IMR-90 (cell line): ENCODE measurements at regions of chr3 and their contacts with region 1.

Region 1: DNA sequence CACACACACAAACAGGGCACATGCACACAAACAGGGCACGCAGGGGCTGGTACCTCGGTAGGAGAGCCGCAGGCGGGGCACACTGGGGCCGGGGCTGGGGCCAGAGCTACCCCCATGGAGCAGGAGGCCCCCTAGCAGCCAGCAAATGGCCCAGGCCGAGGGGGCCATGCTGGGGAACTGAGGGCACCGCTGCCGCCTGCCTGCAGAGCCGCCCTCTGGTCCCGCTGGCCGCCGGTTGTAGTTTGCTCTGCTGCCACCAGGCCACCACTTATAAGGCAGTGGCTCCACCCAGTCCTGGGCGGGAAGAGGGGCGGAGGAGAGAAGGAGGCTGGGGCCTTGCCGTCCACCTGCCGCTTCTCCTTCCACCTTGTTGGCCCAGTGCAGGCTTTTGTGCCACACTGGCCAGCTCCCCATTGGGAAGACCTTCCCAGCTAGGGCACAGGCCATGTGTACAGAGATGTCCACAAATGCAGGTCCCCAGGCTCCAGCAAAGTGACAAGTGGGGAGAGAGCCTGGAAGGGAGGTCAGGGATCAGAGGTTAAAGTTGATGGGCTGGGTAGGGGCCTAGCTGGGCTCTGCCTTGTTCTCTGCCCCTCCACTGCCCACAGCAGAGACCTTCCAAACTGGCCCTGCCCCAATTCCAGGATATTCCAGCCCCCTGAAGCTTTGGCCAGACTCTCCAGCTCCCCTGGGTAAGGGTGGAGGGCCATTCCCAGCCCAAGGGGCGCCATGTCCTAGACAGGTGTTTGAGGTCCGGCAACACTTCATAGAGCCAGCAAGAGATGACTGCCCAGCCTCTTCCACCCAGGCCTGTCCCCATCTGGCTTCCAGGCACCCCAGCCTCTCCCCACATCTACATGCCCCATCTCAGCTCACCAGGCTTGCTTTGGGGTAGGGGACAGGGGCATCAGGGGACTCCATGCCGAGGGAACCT is at the start of gene SEMA3G:
- DNase-seq: peak; percentile 34
- ATAC-seq: peak; percentile 92
- H3K4me3 ChIP-seq: no peak within 1 kb of the TSS
- H3K27ac ChIP-seq: no peak within 1 kb of the TSS
- H3K4me1 ChIP-seq: no peaks in the 10 kb centered on the region; the same call in 1 of the 2 replicates
- H3K27me3 ChIP-seq: no peaks in the 10 kb centered on the region
- CTCF ChIP-seq: peak; percentile 50
- POLR2A ChIP-seq: no peak
- RAD21 ChIP-seq: no peak
- total RNA-seq, gene SEMA3G: not detected in 2 replicates

Region 2: GRCh38 chr3:52197842-52198668 is 247.1 kb before region 1 on chr3 and contains the start of gene ALAS1:
- CTCF ChIA-PET with region 1: no interaction called
- POLR2A ChIA-PET with region 1: no interaction called
- dilution Hi-C with region 1: no loop called
- in situ Hi-C with region 1: no loop called
- intact Hi-C with region 1: no loop called
- DNase-seq: peak; percentile 82
- ATAC-seq: peak; percentile 84
- H3K4me3 ChIP-seq: peak within 1 kb of the TSS; percentile 85
- H3K27ac ChIP-seq: peak within 1 kb of the TSS; percentile 81
- H3K4me1 ChIP-seq: peaks cover 36% of the 10 kb centered on the region
- H3K27me3 ChIP-seq: no peaks in the 10 kb centered on the region
- CTCF ChIP-seq: no peak
- POLR2A ChIP-seq: peak; percentile 91
- RAD21 ChIP-seq: no peak
- total RNA-seq, gene ALAS1: 29.7 and 32.8 TPM in 2 replicates

Region 3: DNA sequence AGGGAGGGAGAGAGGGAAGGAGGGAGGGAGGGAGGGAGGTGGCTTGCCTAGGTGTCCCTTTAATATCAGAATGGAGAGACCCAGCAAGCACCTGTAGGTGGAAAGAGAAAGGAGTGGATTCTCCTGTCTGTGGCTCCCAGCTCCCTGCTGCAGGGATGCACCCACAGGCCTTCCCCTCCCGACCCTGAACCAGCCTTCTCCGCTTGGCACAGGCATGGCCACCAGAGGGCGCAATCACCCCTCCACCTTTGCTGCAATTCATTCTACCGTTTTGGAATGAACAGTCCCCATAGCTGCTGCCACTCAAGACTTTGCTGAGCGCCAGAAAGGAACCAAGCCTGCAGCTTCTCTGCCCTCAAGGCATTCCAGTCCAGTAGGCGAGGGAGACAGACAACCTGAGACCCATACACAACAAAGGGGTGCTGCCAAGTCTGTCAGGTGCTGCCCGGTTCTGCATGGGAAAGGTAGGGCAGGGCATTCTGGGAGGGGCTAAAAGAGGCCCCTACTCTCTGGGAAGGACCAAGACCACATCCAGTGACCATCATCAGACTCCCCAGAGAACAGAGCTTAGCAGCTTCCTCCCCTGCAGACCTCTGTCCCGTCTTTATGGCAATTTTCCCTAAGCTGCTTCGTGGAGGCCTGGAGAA is 224.6 kb before region 1 on chr3:
- CTCF ChIA-PET with region 1: no interaction called
- POLR2A ChIA-PET with region 1: no interaction called
- dilution Hi-C with region 1: no loop called
- in situ Hi-C with region 1: no loop called
- intact Hi-C with region 1: loop called (anchors 5 kb)
- DNase-seq: peak; percentile 63
- ATAC-seq: peak; percentile 73
- H3K4me3 ChIP-seq: no peak overlapping the region
- H3K27ac ChIP-seq: no peak overlapping the region
- H3K4me1 ChIP-seq: peaks cover 8% of the 10 kb centered on the region
- H3K27me3 ChIP-seq: no peaks in the 10 kb centered on the region
- CTCF ChIP-seq: peak; percentile 88
- POLR2A ChIP-seq: no peak
- RAD21 ChIP-seq: peak; percentile 76

Region 4: GRCh38 chr3:52291508-52292181 is 153.5 kb before region 1 on chr3:
- CTCF ChIA-PET with region 1: no interaction called
- POLR2A ChIA-PET with region 1: no interaction called
- dilution Hi-C with region 1: no loop called
- in situ Hi-C with region 1: no loop called
- intact Hi-C with region 1: loop called (anchors 1 kb)
- DNase-seq: no peak
- ATAC-seq: peak; percentile 16; the same call in 1 of the 2 replicates
- H3K4me3 ChIP-seq: no peak overlapping the region
- H3K27ac ChIP-seq: no peak overlapping the region
- H3K4me1 ChIP-seq: peaks cover 6% of the 10 kb centered on the region
- H3K27me3 ChIP-seq: no peaks in the 10 kb centered on the region
- CTCF ChIP-seq: peak; percentile 65
- POLR2A ChIP-seq: no peak
- RAD21 ChIP-seq: peak; percentile 81

Region 5: GRCh38 chr3:52407779-52408178 is 37.3 kb before region 1 on chr3:
- CTCF ChIA-PET with region 1: interaction called, 11 read pairs
- POLR2A ChIA-PET with region 1: no interaction called
- dilution Hi-C with region 1: no loop called
- in situ Hi-C with region 1: no loop called
- intact Hi-C with region 1: loop called (anchors 1 kb)
- DNase-seq: no peak
- ATAC-seq: no peak
- H3K4me3 ChIP-seq: no peak overlapping the region
- H3K27ac ChIP-seq: no peak overlapping the region
- H3K4me1 ChIP-seq: peaks cover 18% of the 10 kb centered on the region
- H3K27me3 ChIP-seq: no peaks in the 10 kb centered on the region
- CTCF ChIP-seq: no peak
- POLR2A ChIP-seq: no peak
- RAD21 ChIP-seq: no peak

Region 6: GRCh38 chr3:52423173-52423572 is 22.0 kb before region 1 on chr3:
- CTCF ChIA-PET with region 1: interaction called, 13 read pairs
- POLR2A ChIA-PET with region 1: no interaction called
- dilution Hi-C with region 1: no loop called
- in situ Hi-C with region 1: no loop called
- intact Hi-C with region 1: loop called (anchors 1 kb)
- DNase-seq: no peak
- ATAC-seq: peak; percentile 48
- H3K4me3 ChIP-seq: no peak overlapping the region
- H3K27ac ChIP-seq: no peak overlapping the region
- H3K4me1 ChIP-seq: no peaks in the 10 kb centered on the region
- H3K27me3 ChIP-seq: 0 out of 2 replicates have a peak, but pooled peaks cover 2% of the 10 kb centered on the region
- CTCF ChIP-seq: no peak
- POLR2A ChIP-seq: no peak
- RAD21 ChIP-seq: no peak

Region 7: GRCh38 chr3:52428151-52429005 is 16.7 kb before region 1 on chr3:
- CTCF ChIA-PET with region 1: interaction called, 13 read pairs
- POLR2A ChIA-PET with region 1: no interaction called
- dilution Hi-C with region 1: no loop called
- in situ Hi-C with region 1: no loop called
- intact Hi-C with region 1: loop called (anchors 1 kb)
- DNase-seq: peak; percentile 83
- ATAC-seq: peak; percentile 98
- H3K4me3 ChIP-seq: no peak overlapping the region
- H3K27ac ChIP-seq: no peak overlapping the region
- H3K4me1 ChIP-seq: peaks cover 4% of the 10 kb centered on the region; the same call in 1 of the 2 replicates
- H3K27me3 ChIP-seq: peaks cover 5% of the 10 kb centered on the region; the same call in 1 of the 2 replicates
- CTCF ChIP-seq: peak; percentile 85
- POLR2A ChIP-seq: 0 out of 2 replicates have a peak, but pooled peaks have one; percentile 28
- RAD21 ChIP-seq: peak; percentile 82